ENCODE measurements at regions of chr11 and their contacts with region 1.

Region 1: DNA sequence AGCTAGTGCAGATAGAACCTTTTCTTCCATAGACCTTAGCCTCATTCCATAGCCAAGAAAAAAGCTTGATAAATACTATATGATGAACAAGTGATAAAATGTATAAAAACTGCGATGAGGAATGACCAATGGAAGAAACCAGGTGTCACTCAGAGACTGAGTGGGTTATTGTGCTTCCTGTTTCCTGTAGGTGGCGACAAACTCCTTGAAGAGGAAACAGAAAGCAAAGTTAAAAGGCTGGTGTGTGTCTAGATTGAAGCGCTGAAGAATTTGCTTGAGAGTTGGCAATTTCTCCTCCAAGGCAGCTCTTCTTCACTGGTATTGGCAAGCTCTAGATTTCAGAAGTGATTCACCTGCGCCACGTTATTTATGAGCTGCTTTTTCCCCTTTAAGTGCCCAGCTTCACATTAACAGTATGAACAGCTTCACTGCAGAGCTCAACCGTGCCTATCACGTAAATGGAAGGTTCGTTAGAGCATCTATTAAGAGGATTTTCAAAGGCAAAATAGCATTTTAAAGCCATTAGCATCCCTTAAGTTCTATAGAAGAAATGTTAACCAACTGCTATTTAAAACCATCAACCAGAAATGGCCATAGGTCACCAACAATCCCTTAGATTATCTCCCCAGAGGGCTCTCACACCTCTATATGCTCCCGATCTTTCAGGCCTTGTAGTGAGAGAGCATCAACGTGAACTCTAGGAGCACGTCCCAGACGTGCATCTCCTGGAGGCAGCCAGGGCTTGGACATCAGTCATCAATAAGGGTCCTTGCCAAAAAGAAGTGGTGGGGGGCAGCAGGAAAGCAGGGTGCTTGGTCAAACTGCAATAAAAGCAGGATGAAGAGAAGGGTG is 179.4 kb downstream of the CADM1 start:
- DNase-seq: peak; percentile 13
- ATAC-seq: peak; percentile 87
- H3K4me3 Mint-ChIP-seq: no peak overlapping the region
- H3K27ac Mint-ChIP-seq: no peak overlapping the region
- H3K4me1 Mint-ChIP-seq: peaks cover 6% of the 10 kb centered on the region
- H3K27me3 Mint-ChIP-seq: no peaks in the 10 kb centered on the region
- CTCF ChIP-seq: peak; percentile 62; the same call in 1 of the 2 replicates

Region 2: DNA sequence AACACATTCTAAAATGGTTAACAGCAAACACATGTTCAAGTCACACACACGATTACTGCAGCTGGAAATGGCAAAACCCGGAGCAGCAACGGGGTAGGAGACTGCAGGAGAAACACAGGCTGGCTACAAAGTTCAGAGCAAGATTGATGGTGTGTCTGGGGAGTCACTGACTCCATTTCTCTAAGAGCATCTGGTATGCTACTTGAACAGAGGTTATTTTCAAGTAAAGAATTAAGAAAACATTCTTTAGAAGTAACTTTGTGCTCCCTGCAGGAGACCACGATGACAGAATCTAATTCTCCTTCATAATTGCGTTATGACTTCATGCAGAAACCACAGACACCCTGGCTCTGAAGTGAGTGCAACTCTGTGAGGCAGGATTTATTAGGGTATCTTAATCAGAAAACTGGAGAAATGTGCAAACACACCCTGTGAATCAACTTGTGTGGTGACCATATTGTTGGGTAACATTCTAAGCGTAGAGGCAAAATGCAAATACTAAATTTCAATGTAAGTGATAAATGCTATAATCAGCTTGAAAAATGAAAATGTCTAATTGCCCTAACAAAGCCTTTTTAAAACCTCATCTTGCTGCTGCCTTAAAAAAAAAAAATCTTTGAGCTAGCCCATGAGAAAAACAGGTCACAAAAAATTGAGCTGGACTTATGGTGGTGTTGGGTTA is 123.6 kb before region 1 on chr11:
- CTCF ChIA-PET with region 1: no interaction called
- POLR2A ChIA-PET with region 1: no interaction called
- DNase-seq: no peak
- ATAC-seq: no peak
- H3K4me3 Mint-ChIP-seq: no peak overlapping the region
- H3K27ac Mint-ChIP-seq: no peak overlapping the region
- H3K4me1 Mint-ChIP-seq: peaks cover 36% of the 10 kb centered on the region
- H3K27me3 Mint-ChIP-seq: peaks cover 19% of the 10 kb centered on the region
- CTCF ChIP-seq: no peak

Region 3: GRCh38 chr11:115279813-115280761 is 44.7 kb before region 1 on chr11:
- CTCF ChIA-PET with region 1: no interaction called
- POLR2A ChIA-PET with region 1: no interaction called
- DNase-seq: no peak
- ATAC-seq: no peak
- H3K4me3 Mint-ChIP-seq: no peak overlapping the region
- H3K27ac Mint-ChIP-seq: no peak overlapping the region
- H3K4me1 Mint-ChIP-seq: peaks cover 9% of the 10 kb centered on the region
- H3K27me3 Mint-ChIP-seq: no peaks in the 10 kb centered on the region
- CTCF ChIP-seq: no peak

Region 4: GRCh38 chr11:115300660-115301428 is 24.0 kb before region 1 on chr11:
- CTCF ChIA-PET with region 1: no interaction called
- POLR2A ChIA-PET with region 1: no interaction called
- DNase-seq: no peak
- ATAC-seq: no peak
- H3K4me3 Mint-ChIP-seq: no peak overlapping the region
- H3K27ac Mint-ChIP-seq: no peak overlapping the region
- H3K4me1 Mint-ChIP-seq: no peaks in the 10 kb centered on the region
- H3K27me3 Mint-ChIP-seq: no peaks in the 10 kb centered on the region
- CTCF ChIP-seq: no peak

Region 5: GRCh38 chr11:115360186-115360824 is 35.5 kb after region 1 on chr11:
- CTCF ChIA-PET with region 1: no interaction called
- POLR2A ChIA-PET with region 1: no interaction called
- DNase-seq: no peak
- ATAC-seq: no peak
- H3K4me3 Mint-ChIP-seq: no peak overlapping the region
- H3K27ac Mint-ChIP-seq: no peak overlapping the region
- H3K4me1 Mint-ChIP-seq: no peaks in the 10 kb centered on the region
- H3K27me3 Mint-ChIP-seq: no peaks in the 10 kb centered on the region
- CTCF ChIP-seq: no peak

Region 6: GRCh38 chr11:115678942-115679341 is 354.1 kb after region 1 on chr11:
- CTCF ChIA-PET with region 1: interaction called, 15 read pairs
- POLR2A ChIA-PET with region 1: no interaction called
- DNase-seq: peak; percentile 71
- ATAC-seq: peak; percentile 86
- H3K4me3 Mint-ChIP-seq: no peak overlapping the region
- H3K27ac Mint-ChIP-seq: no peak overlapping the region
- H3K4me1 Mint-ChIP-seq: peaks cover 14% of the 10 kb centered on the region
- H3K27me3 Mint-ChIP-seq: no peaks in the 10 kb centered on the region; the same call in 1 of the 2 replicates
- CTCF ChIP-seq: no peak